ENCODE measurements at regions of chr14 and their contacts with region 1.

Region 1: GRCh38 chr14:61347826-61348443 is 26.6 kb downstream of the PRKCH start:
- DNase-seq: no peak
- H3K4me3 ChIP-seq: peak overlapping the region; percentile 42
- H3K4me3 Mint-ChIP-seq: peak overlapping the region; percentile 77 to 90 (median 83)
- H3K27ac ChIP-seq: peak overlapping the region; percentile 28
- H3K27ac Mint-ChIP-seq: peak overlapping the region; percentile 96 to 99 (median 97)
- H3K4me1 ChIP-seq: peaks cover 100% of the 10 kb centered on the region
- H3K4me1 Mint-ChIP-seq: peaks cover 97 to 100% (median 100%) of the 10 kb centered on the region in 3 donors
- H3K27me3 ChIP-seq: no peaks in the 10 kb centered on the region
- H3K27me3 Mint-ChIP-seq: no peaks in the 10 kb centered on the region

Region 2: GRCh38 chr14:61174987-61175386 is 172.9 kb before region 1 on chr14:
- CTCF ChIA-PET with region 1: no interaction called
- POLR2A ChIA-PET with region 1: no interaction called
- DNase-seq: no peak
- H3K4me3 ChIP-seq: no peak overlapping the region
- H3K4me3 Mint-ChIP-seq: no peak overlapping the region
- H3K27ac ChIP-seq: no peak overlapping the region
- H3K27ac Mint-ChIP-seq: no peak overlapping the region
- H3K4me1 ChIP-seq: peaks cover 8% of the 10 kb centered on the region
- H3K4me1 Mint-ChIP-seq: peaks cover 8 to 23% (median 9%) of the 10 kb centered on the region in 3 donors
- H3K27me3 ChIP-seq: no peaks in the 10 kb centered on the region
- H3K27me3 Mint-ChIP-seq: peaks cover 21 to 59% of the 10 kb centered on the region in 2 donors

Region 3: GRCh38 chr14:61360796-61361525 is 13.0 kb after region 1 on chr14:
- CTCF ChIA-PET with region 1: interaction called, 10 read pairs
- POLR2A ChIA-PET with region 1: interaction called, 6 read pairs
- DNase-seq: no peak
- H3K4me3 ChIP-seq: peak overlapping the region; percentile 32
- H3K4me3 Mint-ChIP-seq: peak overlapping the region; percentile 33 to 88 (median 72)
- H3K27ac ChIP-seq: no peak overlapping the region
- H3K27ac Mint-ChIP-seq: peak overlapping the region; percentile 72 to 94 (median 84)
- H3K4me1 ChIP-seq: peaks cover 96% of the 10 kb centered on the region
- H3K4me1 Mint-ChIP-seq: peaks cover 43 to 57% (median 57%) of the 10 kb centered on the region in 3 donors
- H3K27me3 ChIP-seq: no peaks in the 10 kb centered on the region
- H3K27me3 Mint-ChIP-seq: no peaks in the 10 kb centered on the region

Region 4: GRCh38 chr14:61379639-61380184 is 31.8 kb after region 1 on chr14:
- CTCF ChIA-PET with region 1: interaction called, 10 read pairs
- POLR2A ChIA-PET with region 1: interaction called, 4 read pairs
- DNase-seq: peak in 2 of 5 donors; percentile 49 to 60
- H3K4me3 ChIP-seq: peak overlapping the region; percentile 28
- H3K4me3 Mint-ChIP-seq: peak overlapping the region in 4 of 7 donors; percentile 64 to 87 (median 76)
- H3K27ac ChIP-seq: no peak overlapping the region
- H3K27ac Mint-ChIP-seq: peak overlapping the region in 4 of 8 donors; percentile 86 to 97 (median 95)
- H3K4me1 ChIP-seq: peaks cover 98% of the 10 kb centered on the region
- H3K4me1 Mint-ChIP-seq: peaks cover 0 to 32% (median 0%) of the 10 kb centered on the region in 3 donors
- H3K27me3 ChIP-seq: no peaks in the 10 kb centered on the region
- H3K27me3 Mint-ChIP-seq: no peaks in the 10 kb centered on the region

Region 5: DNA sequence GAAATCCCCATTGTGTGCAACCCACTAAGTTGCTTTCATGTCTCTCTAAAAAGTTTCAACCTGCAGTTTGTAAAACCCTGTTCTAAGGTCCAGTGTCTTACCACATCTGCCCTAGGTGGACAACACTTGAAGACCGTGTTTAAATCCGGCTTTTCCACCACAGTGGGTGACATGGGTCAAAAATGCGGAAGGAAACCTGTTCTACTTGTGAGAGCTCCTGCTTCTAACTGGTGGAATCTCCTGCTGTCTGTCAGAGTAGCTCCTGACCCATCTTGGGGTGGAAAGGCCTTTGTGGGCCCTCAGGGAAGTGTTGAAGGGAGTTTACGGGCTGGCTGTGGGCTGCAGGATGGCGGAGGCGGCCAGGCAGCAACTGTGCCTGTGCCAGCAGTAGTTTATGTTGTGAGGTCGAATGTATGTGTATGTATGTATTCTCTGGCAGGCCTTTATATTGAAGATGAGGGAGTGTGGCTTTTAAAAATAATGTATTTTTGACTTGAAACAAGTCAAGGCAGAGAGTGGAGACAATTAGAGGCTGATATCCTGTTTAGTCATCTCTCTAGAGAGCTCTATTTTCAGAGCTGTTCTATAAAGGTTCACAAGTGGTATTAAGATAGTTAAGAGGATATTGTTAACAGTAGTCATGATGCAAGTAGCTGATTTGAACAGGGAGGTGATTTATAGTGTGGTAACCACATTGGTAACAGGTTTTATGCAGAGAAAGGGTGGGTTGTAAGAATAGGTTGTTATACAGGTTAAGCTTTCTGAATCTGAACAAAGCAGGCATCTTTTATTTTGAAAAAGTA is 40.4 kb after region 1 on chr14:
- CTCF ChIA-PET with region 1: interaction called, 3 read pairs
- POLR2A ChIA-PET with region 1: interaction called, 16 read pairs
- DNase-seq: peak; percentile 24 to 72 (median 53)
- H3K4me3 ChIP-seq: peak overlapping the region; percentile 34
- H3K4me3 Mint-ChIP-seq: peak overlapping the region in 2 of 7 donors; percentile 61 to 72
- H3K27ac ChIP-seq: peak overlapping the region; percentile 44
- H3K27ac Mint-ChIP-seq: no peak overlapping the region
- H3K4me1 ChIP-seq: peaks cover 99% of the 10 kb centered on the region
- H3K4me1 Mint-ChIP-seq: no peaks in the 10 kb centered on the region
- H3K27me3 ChIP-seq: no peaks in the 10 kb centered on the region
- H3K27me3 Mint-ChIP-seq: no peaks in the 10 kb centered on the region

Measured in CD8-positive, alpha-beta memory T cell (primary cell).